Keratinocyte (primary cell): ENCODE measurements at regions of chr11 and their contacts with region 1.

Region 1: GRCh38 chr11:128630367-128631230 is 43.2 kb upstream of the ETS1 start:
- DNase-seq: peak; percentile 13
- H3K4me3 ChIP-seq: no peak overlapping the region
- H3K27ac ChIP-seq: no peak overlapping the region
- H3K4me1 ChIP-seq: no peaks in the 10 kb centered on the region
- H3K27me3 ChIP-seq: no peaks in the 10 kb centered on the region
- CTCF ChIP-seq: peak; percentile 74 to 83 (median 80)

Region 2: DNA sequence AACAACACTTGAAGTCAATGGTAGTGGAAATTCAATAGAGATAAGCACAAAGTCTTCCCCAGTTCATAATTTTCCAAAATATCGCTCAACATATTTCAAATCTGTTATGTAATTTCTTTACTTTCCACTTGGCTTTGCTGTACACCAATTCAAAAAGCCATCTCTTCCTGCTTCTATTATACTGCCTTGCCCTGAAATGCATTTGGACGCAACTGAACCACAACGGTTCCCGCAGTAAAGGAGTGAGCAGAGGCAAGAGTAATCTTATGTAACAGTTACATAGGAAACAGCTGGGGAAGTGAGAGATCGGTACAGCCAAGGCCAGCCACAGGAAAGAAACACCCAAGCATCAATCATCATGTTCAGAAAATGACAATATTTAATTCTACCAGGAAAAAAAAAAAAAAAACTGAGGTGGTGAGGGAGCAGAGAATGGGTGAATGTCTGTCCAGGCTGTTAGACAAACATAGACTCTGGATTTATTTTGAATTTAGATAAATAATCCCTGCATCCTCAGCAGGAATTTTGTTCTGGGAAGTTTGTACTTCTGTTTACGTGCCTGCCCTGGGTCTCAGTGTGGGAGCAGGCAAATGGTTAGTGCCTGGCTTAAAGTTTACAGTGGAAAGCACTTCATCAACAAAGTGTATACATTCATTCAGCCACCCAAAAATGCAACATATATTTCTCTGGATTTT is 435.4 kb before region 1 on chr11:
- dilution Hi-C with region 1: loop called (anchors 25 kb)
- DNase-seq: no peak
- H3K4me3 ChIP-seq: no peak overlapping the region
- H3K27ac ChIP-seq: no peak overlapping the region
- H3K4me1 ChIP-seq: peaks cover 16% of the 10 kb centered on the region
- H3K27me3 ChIP-seq: no peaks in the 10 kb centered on the region
- CTCF ChIP-seq: no peak

Region 3: DNA sequence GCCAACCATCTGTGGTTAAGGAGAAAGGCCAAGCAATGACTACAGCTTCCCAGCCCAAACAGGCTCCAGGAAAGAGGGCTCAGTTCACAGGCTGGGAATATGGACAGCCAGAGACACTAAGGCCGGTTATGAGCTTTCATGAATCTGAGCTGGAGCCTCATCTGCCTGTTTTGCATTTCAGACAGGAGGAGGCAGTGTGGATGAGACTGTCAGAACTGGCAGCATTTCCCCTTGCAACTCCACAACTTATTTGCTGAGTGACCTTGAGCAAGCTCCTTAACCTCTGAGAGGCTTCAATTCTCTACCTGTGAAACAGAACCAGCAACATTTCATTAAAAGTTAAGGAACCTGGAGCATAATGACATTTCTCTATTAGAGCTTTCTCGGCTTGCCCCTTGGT is 307.2 kb before region 1 on chr11:
- dilution Hi-C with region 1: loop called (anchors 25 kb)
- DNase-seq: no peak
- H3K4me3 ChIP-seq: no peak overlapping the region
- H3K27ac ChIP-seq: no peak overlapping the region
- H3K4me1 ChIP-seq: no peaks in the 10 kb centered on the region
- H3K27me3 ChIP-seq: peaks cover 8% of the 10 kb centered on the region
- CTCF ChIP-seq: peak; percentile 13 to 56 (median 52)